Activated naive CD4-positive, alpha-beta T cell treated with anti-CD3 and anti-CD28 coated beads, Interleukin-2, amount 10 ng/mL, durations not matched to agents 7 days and 5 days (primary cell): ENCODE measurements at regions of chr17 and their contacts with region 1.

Region 1: GRCh38 chr17:37373530-37374159 is 2.1 kb upstream of the C17orf78 start:
- DNase-seq: peak; percentile 82
- H3K4me3 Mint-ChIP-seq: no peak overlapping the region
- H3K27ac Mint-ChIP-seq: no peak overlapping the region
- H3K4me1 Mint-ChIP-seq: peaks cover 6% of the 10 kb centered on the region
- H3K27me3 Mint-ChIP-seq: peaks cover 5% of the 10 kb centered on the region

Region 2: DNA sequence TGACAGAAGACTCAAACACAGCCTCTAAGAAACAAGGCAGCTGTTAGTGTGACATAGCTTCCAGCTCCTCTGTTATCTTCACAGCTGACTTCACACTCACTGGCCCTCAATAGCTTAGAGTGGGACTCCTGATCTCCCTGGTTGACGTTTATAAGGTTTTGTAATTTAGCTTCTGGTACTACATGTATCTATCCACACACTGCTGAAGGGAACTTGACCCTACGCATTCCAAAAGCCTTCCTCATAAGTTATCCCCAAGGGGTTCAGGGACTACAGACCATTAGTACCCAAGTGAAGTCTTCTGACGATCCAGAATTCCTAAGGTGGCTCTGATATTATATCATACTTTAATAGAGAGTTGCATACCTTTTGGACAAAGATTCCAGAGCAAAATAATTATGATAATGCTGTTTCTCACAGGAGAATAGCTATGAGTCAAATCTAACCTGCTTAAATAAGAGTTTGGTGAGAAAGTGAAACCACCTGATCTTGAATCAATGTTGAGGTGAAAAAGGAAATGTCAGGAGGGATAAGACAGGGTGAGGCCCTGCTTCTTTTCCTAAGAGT is 18.5 kb after region 1 on chr17:
- CTCF ChIA-PET with region 1: interaction called, 24 read pairs
- DNase-seq: no peak
- H3K4me3 Mint-ChIP-seq: no peak overlapping the region
- H3K27ac Mint-ChIP-seq: no peak overlapping the region
- H3K4me1 Mint-ChIP-seq: peaks cover 23% of the 10 kb centered on the region
- H3K27me3 Mint-ChIP-seq: no peaks in the 10 kb centered on the region

Region 3: GRCh38 chr17:37399404-37399803 is 25.8 kb after region 1 on chr17:
- CTCF ChIA-PET with region 1: interaction called, 24 read pairs
- DNase-seq: no peak
- H3K4me3 Mint-ChIP-seq: no peak overlapping the region
- H3K27ac Mint-ChIP-seq: no peak overlapping the region
- H3K4me1 Mint-ChIP-seq: peaks cover 22% of the 10 kb centered on the region
- H3K27me3 Mint-ChIP-seq: no peaks in the 10 kb centered on the region